ENCODE measurements at regions of chr16 and their contacts with region 1.

Region 1: GRCh38 chr16:30534368-30535105 is at the start of gene ZNF747:
- DNase-seq: peak; percentile 51
- ATAC-seq: peak; percentile 89
- H3K4me3 ChIP-seq: peak within 1 kb of the TSS; percentile 90
- H3K27ac ChIP-seq: peak within 1 kb of the TSS; percentile 85
- H3K4me1 ChIP-seq: no peaks in the 10 kb centered on the region
- H3K27me3 ChIP-seq: no peaks in the 10 kb centered on the region
- CTCF ChIP-seq: peak in 1 of 3 experiments; percentile 1; a peak in 1 of 6 replicates
- EP300 ChIP-seq: no peak
- POLR2A ChIP-seq: peak; percentile 76
- RAD21 ChIP-seq: no peak
- polyA plus RNA-seq, gene ZNF747: 1.0 to 1.2 TPM

Region 2: DNA sequence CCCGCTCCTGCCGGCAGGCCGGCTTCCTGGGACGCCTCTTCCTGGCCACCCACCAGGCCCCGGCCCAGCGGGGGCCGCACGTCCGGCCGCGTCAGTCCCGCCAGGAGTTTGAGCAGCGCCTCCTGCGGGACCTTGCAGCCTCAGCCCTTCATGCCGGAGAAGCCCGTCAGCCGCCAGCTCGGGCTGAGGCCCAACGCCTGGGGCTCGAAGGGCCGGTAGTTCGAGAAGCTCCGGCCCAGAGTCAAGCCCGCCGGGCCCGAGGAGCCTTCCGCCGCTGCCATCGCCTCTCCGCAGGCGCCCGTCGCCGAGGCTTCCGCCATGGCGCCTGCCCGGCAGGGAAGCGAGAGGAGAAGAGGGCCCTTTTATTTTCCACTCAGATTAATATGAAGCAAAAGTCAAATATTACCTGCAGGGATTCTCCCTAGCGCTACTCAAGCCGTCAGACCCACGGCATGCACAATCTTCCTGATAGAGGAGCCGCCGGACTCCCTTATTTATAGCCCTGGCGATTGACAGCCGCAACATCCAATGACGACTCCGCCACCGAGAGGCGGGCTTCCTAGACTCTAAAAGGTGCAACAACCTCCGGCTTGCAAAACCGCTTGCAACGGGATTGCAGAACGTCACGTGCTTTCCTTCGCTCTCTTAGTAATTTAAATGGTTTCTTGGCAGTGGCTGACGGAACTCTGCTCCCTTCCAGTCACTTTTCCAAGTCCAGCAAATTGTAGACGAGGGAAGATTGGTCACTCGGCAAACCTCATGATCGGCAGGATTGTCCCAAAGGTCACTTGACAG is 88.9 kb before region 1 on chr16 and contains the start of gene SEPHS2:
- CTCF ChIA-PET with region 1: interaction called, 60 read pairs
- POLR2A ChIA-PET with region 1: interaction called, 7 read pairs
- RAD21 ChIA-PET with region 1: interaction called, 44 read pairs
- SMC1A ChIA-PET with region 1: interaction called, 32 read pairs
- in situ Hi-C with region 1: no loop called
- intact Hi-C with region 1: loop called (anchors 5 kb)
- DNase-seq: peak; percentile 84
- ATAC-seq: peak; percentile 94
- H3K4me3 ChIP-seq: peak within 1 kb of the TSS; percentile 79
- H3K27ac ChIP-seq: peak within 1 kb of the TSS; percentile 85
- H3K4me1 ChIP-seq: peaks cover 10% of the 10 kb centered on the region
- H3K27me3 ChIP-seq: no peaks in the 10 kb centered on the region
- CTCF ChIP-seq: peak; percentile 38 to 52 (median 49); a peak in 5 of 6 replicates
- EP300 ChIP-seq: no peak
- POLR2A ChIP-seq: peak; percentile 90
- RAD21 ChIP-seq: no peak
- polyA plus RNA-seq, gene SEPHS2: 21.6 to 37.4 TPM

Region 3: DNA sequence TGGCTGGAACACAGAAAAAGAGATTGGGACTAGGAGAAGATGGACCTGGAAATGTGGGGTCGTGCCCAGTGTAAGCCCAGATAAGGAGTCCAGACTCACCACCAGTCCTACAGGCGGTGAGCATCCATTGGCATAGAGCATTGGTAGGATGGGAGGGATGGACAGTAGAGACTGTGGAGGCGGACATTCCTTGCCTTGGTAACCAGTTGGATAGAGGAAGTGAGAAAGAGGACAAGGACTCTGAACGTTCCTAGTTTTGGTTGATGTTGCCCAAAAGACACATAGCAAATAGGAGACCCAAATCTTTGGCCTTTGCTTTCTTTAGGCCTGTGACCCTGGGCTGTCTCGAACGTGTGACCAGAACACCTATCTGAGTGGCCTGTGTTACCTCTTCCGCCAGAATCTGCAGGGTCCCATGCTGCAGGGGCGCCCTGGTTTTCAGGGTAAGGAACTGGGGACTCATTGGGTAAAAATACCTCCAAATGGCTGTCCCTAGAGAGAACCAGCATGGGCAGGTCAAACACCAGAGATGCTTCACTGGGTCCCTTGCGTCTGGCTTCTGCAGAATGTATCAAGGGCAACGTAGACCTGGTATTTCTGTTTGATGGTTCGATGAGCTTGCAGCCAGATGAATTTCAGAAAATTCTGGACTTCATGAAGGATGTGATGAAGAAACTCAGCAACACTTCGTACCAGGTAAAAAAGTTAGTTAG is 55.6 kb before region 1 on chr16:
- CTCF ChIA-PET with region 1: interaction called, 15 read pairs
- POLR2A ChIA-PET with region 1: interaction called, 7 read pairs
- RAD21 ChIA-PET with region 1: interaction called, 15 read pairs
- SMC1A ChIA-PET with region 1: interaction called, 18 read pairs
- in situ Hi-C with region 1: no loop called
- intact Hi-C with region 1: no loop called
- DNase-seq: no peak
- ATAC-seq: peak; percentile 5
- H3K4me3 ChIP-seq: no peak overlapping the region
- H3K27ac ChIP-seq: no peak overlapping the region
- H3K4me1 ChIP-seq: peaks cover 11% of the 10 kb centered on the region
- H3K27me3 ChIP-seq: no peaks in the 10 kb centered on the region
- CTCF ChIP-seq: no peak
- EP300 ChIP-seq: no peak
- POLR2A ChIP-seq: peak; percentile 35; the same call in 1 of the 2 replicates
- RAD21 ChIP-seq: no peak

Region 4: GRCh38 chr16:30571695-30572600 is 37.4 kb after region 1 on chr16 and contains the start of gene ZNF688:
- CTCF ChIA-PET with region 1: interaction called, 19 read pairs
- POLR2A ChIA-PET with region 1: interaction called, 24 read pairs
- RAD21 ChIA-PET with region 1: interaction called, 22 read pairs
- SMC1A ChIA-PET with region 1: interaction called, 6 read pairs
- in situ Hi-C with region 1: no loop called
- intact Hi-C with region 1: loop called (anchors 1 kb)
- DNase-seq: peak; percentile 95
- ATAC-seq: peak; percentile 89
- H3K4me3 ChIP-seq: peak within 1 kb of the TSS; percentile 81
- H3K27ac ChIP-seq: peak within 1 kb of the TSS; percentile 93
- H3K4me1 ChIP-seq: peaks cover 26% of the 10 kb centered on the region
- H3K27me3 ChIP-seq: no peaks in the 10 kb centered on the region
- CTCF ChIP-seq: no peak
- EP300 ChIP-seq: no peak
- POLR2A ChIP-seq: peak; percentile 65
- RAD21 ChIP-seq: no peak
- polyA plus RNA-seq, gene ZNF688: 0.14 to 0.88 TPM

Region 5: DNA sequence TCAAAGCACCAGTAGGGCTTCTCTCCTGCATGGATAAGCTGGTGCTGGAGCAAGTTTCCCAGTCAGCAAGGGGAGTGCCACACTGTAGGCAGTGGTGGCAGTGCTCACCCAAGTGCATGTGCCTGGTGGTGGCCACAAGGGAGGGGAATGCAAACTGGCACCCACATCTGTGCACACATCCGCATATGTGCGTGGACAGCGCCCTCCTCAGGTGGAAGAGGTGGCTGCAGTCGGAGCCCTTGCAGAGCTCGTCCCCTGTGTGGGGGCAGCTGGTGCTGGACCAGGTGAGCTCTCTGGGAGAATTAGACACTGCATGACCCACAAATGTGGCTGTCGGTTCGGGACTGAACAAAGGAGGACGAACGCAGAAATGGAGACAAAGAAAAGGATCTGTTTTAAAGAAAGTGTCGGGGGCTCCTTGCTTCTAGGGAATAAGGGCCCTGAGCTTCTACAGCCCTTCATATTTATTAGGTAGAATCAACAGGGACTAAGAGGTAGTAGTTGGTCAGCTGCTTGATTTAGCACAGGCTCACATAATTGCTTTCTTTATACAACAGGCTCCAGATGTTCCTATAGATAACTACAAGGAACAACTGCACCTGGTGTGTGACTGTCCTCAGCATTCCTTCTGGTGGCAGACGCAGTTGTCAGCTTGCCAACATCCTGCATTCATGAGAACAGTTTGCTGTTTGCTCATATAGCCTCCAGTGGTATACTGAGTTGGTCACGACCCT is 81.0 kb after region 1 on chr16:
- CTCF ChIA-PET with region 1: interaction called, 11 read pairs
- POLR2A ChIA-PET with region 1: interaction called, 3 read pairs
- RAD21 ChIA-PET with region 1: interaction called, 3 read pairs
- SMC1A ChIA-PET with region 1: interaction called, 3 read pairs
- in situ Hi-C with region 1: no loop called
- intact Hi-C with region 1: no loop called
- DNase-seq: no peak
- ATAC-seq: peak; percentile 82
- H3K4me3 ChIP-seq: no peak overlapping the region
- H3K27ac ChIP-seq: no peak overlapping the region
- H3K4me1 ChIP-seq: no peaks in the 10 kb centered on the region
- H3K27me3 ChIP-seq: no peaks in the 10 kb centered on the region
- CTCF ChIP-seq: peak; percentile 72 to 75 (median 74)
- EP300 ChIP-seq: no peak
- POLR2A ChIP-seq: no peak
- RAD21 ChIP-seq: peak; percentile 72

Region 6: GRCh38 chr16:30669042-30669895 is 134.7 kb after region 1 on chr16:
- CTCF ChIA-PET with region 1: no interaction called
- POLR2A ChIA-PET with region 1: no interaction called
- RAD21 ChIA-PET with region 1: no interaction called
- SMC1A ChIA-PET with region 1: no interaction called
- in situ Hi-C with region 1: no loop called
- intact Hi-C with region 1: no loop called
- DNase-seq: no peak
- ATAC-seq: no peak
- H3K4me3 ChIP-seq: no peak overlapping the region
- H3K27ac ChIP-seq: no peak overlapping the region
- H3K4me1 ChIP-seq: no peaks in the 10 kb centered on the region
- H3K27me3 ChIP-seq: no peaks in the 10 kb centered on the region
- CTCF ChIP-seq: no peak
- EP300 ChIP-seq: no peak
- POLR2A ChIP-seq: peak; percentile 55; the same call in 1 of the 2 replicates
- RAD21 ChIP-seq: no peak

Measured in GM12878 (cell line).